ENCODE measurements at regions of chr9 and their contacts with region 1.

Region 1: GRCh38 chr9:122125158-122125508 is 32.0 kb upstream of the TTLL11 start:
- DNase-seq: peak; percentile 81
- H3K4me3 ChIP-seq: no peak overlapping the region
- H3K27ac ChIP-seq: no peak overlapping the region
- H3K4me1 ChIP-seq: peaks cover 0 to 15% (median 8%) of the 10 kb centered on the region in 4 donors
- H3K27me3 ChIP-seq: peaks cover 34% of the 10 kb centered on the region
- CTCF ChIP-seq: peak; percentile 90 to 95 (median 92)
- EP300 ChIP-seq: no peak
- POLR2A ChIP-seq: no peak

Region 2: GRCh38 chr9:121992571-121993212 is 132.4 kb before region 1 on chr9:
- in situ Hi-C with region 1: no loop called
- intact Hi-C with region 1: no loop called
- DNase-seq: peak; percentile 47
- H3K4me3 ChIP-seq: no peak overlapping the region
- H3K27ac ChIP-seq: no peak overlapping the region
- H3K4me1 ChIP-seq: peaks cover 0 to 2% (median 0%) of the 10 kb centered on the region in 4 donors
- H3K27me3 ChIP-seq: no peaks in the 10 kb centered on the region
- CTCF ChIP-seq: peak; percentile 80 to 89 (median 84)
- EP300 ChIP-seq: no peak
- POLR2A ChIP-seq: no peak

Region 3: GRCh38 chr9:122218935-122219855 is 94.1 kb after region 1 on chr9:
- in situ Hi-C with region 1: no loop called
- intact Hi-C with region 1: no loop called
- DNase-seq: no peak
- H3K4me3 ChIP-seq: peak overlapping the region in 1 of 4 donors; percentile 34
- H3K27ac ChIP-seq: no peak overlapping the region
- H3K4me1 ChIP-seq: peaks cover 9 to 22% (median 15%) of the 10 kb centered on the region in 4 donors
- H3K27me3 ChIP-seq: peaks cover 100% of the 10 kb centered on the region
- CTCF ChIP-seq: no peak
- EP300 ChIP-seq: no peak
- POLR2A ChIP-seq: no peak

Region 4: DNA sequence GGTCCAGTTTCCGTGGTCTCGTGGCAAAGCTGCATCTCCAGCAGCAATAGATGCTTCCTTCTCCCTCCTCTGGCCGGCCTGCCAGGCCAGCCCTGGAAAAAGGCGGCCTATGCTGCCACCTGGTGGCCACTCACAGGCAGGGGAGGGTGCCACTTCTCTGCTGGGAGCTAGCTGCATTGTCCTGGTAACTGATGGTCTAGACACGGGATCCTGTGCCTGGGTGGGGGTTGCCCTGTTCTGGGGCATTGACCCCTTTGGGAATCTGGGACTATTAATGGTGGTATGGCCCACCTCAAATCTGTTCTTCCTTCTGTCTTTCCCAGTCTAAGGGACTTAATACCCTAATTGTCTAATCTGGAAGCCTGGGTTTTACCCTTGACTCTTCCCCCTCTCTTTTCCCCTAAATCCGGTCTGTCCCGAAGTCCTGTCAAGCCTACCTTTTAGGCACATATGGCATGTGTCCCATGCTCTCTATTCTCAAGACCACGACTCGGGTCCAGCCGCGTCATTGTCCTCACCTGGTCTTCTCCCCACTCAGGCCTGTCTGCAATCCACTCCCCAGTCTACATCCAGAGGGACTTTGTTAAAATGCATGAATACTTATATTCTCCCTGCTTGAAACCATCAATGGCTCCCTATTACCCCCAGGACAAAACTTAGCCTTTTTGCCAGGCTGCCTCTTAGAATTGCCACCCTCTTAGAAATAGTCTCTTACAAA is 225.7 kb after region 1 on chr9:
- in situ Hi-C with region 1: loop called (anchors 5 to 10 kb)
- intact Hi-C with region 1: loop called (anchors 1 kb)
- DNase-seq: peak; percentile 85
- H3K4me3 ChIP-seq: no peak overlapping the region
- H3K27ac ChIP-seq: no peak overlapping the region
- H3K4me1 ChIP-seq: peaks cover 8 to 21% (median 17%) of the 10 kb centered on the region in 4 donors
- H3K27me3 ChIP-seq: no peaks in the 10 kb centered on the region
- CTCF ChIP-seq: peak; percentile 91 to 98 (median 96)
- EP300 ChIP-seq: no peak
- POLR2A ChIP-seq: no peak

Region 5: DNA sequence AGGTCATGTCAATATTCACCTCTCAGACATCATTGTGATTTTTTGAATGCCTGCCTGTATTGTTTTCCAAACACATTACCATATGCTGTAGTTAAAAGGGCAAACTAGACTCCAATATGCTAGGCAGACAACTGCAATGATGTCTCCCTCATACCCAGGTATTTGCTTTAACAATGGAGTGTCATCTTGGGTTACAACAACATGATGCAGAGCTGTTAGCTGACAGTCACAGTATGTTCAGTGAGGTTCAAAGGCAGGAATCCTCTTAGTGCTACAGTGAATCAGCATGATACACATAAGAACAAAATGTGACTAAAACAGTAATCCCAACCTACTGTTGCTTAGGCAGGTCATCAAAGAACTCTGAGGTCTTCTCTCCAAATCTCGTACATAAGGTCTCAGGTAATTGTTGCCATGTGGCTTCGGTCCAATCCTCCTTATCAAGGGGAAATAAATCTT is 328.6 kb after region 1 on chr9:
- in situ Hi-C with region 1: loop called in 3 of 4 experiments (anchors 10 to 25 kb)
- intact Hi-C with region 1: loop called (anchors 10 kb)
- DNase-seq: no peak
- H3K4me3 ChIP-seq: no peak overlapping the region
- H3K27ac ChIP-seq: no peak overlapping the region
- H3K4me1 ChIP-seq: no peaks in the 10 kb centered on the region
- H3K27me3 ChIP-seq: no peaks in the 10 kb centered on the region
- CTCF ChIP-seq: no peak
- EP300 ChIP-seq: no peak
- POLR2A ChIP-seq: no peak

Region 6: GRCh38 chr9:122464633-122465567 is 339.8 kb after region 1 on chr9:
- in situ Hi-C with region 1: loop called in 2 of 4 experiments (anchors 25 kb)
- intact Hi-C with region 1: no loop called
- DNase-seq: peak; percentile 76
- H3K4me3 ChIP-seq: peak overlapping the region; percentile 16 to 58 (median 26)
- H3K27ac ChIP-seq: peak overlapping the region in 3 of 4 donors; percentile 10 to 63 (median 49)
- H3K4me1 ChIP-seq: peaks cover 5 to 13% (median 7%) of the 10 kb centered on the region in 4 donors
- H3K27me3 ChIP-seq: no peaks in the 10 kb centered on the region
- CTCF ChIP-seq: peak; percentile 79 to 93 (median 81)
- EP300 ChIP-seq: no peak
- POLR2A ChIP-seq: no peak

Region 7: DNA sequence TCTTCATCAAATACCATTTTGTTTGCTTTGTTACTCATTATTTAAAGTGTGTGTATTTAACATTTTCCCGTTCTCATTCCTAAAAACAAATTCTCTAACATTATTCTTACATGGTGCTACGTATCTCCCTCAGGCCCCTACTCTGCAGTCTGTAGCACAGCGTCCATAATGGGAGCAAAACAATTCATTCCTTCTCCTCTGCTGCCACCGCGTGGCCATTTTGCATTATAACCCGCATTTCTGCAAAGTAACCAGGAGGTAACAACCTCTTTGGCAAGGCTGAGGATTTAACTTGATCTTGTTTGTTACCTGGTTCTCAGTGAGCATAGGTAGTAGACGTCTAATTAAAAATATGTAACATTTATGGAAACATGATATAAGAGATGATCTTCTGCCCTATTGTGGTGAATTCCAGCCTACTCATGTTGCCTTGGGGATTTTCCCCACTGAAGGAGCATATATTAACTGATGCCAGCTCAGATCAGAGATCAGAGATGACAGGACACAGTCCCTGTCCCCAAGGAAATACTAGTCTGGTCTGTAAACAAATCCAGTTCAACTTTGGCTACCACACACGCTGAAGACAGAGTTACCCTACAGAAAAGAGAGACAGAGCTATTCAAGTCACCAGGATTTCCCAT is 685.3 kb after region 1 on chr9:
- in situ Hi-C with region 1: loop called (anchors 25 kb)
- intact Hi-C with region 1: no loop called
- DNase-seq: peak; percentile 80
- H3K4me3 ChIP-seq: no peak overlapping the region
- H3K27ac ChIP-seq: no peak overlapping the region
- H3K4me1 ChIP-seq: peaks cover 0 to 7% (median 0%) of the 10 kb centered on the region in 4 donors
- H3K27me3 ChIP-seq: no peaks in the 10 kb centered on the region
- CTCF ChIP-seq: peak; percentile 72 to 83 (median 74)
- EP300 ChIP-seq: no peak
- POLR2A ChIP-seq: no peak

Region 8: GRCh38 chr9:122846371-122846940 is 721.3 kb after region 1 on chr9:
- in situ Hi-C with region 1: no loop called
- intact Hi-C with region 1: no loop called
- DNase-seq: no peak
- H3K4me3 ChIP-seq: no peak overlapping the region
- H3K27ac ChIP-seq: no peak overlapping the region
- H3K4me1 ChIP-seq: no peaks in the 10 kb centered on the region
- H3K27me3 ChIP-seq: no peaks in the 10 kb centered on the region
- CTCF ChIP-seq: no peak
- EP300 ChIP-seq: no peak
- POLR2A ChIP-seq: no peak